Esophagus squamous epithelium (tissue), 5 donors: ENCODE measurements at regions of chr5 and their contacts with region 1.

Region 1: DNA sequence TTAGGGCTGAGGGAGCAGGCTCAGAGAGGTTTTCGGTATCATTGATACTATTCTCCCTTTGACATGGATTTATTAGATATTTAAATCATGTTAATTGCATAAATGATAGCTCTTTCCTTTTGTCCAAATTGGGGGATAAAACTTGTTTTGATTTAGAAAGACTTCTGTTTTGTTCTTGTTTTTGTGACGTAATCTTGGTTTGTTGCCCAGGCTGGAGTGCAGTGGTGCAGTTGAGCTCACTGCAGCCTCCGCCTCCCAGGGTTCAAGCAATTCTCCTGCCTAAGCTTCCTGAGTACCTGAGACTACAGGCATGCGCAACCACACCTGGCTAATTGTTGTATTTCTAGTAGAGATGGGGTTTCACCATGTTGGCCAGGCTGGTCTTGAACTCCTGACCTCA is 7.1 kb downstream of the MAT2B start:
- DNase-seq: no peak
- H3K4me3 ChIP-seq: no peak overlapping the region
- H3K27ac ChIP-seq: no peak overlapping the region
- H3K4me1 ChIP-seq: peaks cover 0 to 56% (median 33%) of the 10 kb centered on the region in 3 donors
- H3K27me3 ChIP-seq: no peaks in the 10 kb centered on the region
- CTCF ChIP-seq: no peak
- POLR2A ChIP-seq: no peak

Region 2: GRCh38 chr5:163104464-163104863 is 408.1 kb before region 1 on chr5:
- intact Hi-C with region 1: no loop called
- DNase-seq: no peak
- H3K4me3 ChIP-seq: no peak overlapping the region
- H3K27ac ChIP-seq: no peak overlapping the region
- H3K4me1 ChIP-seq: no peaks in the 10 kb centered on the region
- H3K27me3 ChIP-seq: no peaks in the 10 kb centered on the region
- CTCF ChIP-seq: no peak
- POLR2A ChIP-seq: no peak

Region 3: GRCh38 chr5:163459922-163460766 is 52.4 kb before region 1 on chr5 and contains the starts of genes HMMR and NUDCD2:
- intact Hi-C with region 1: loop called (anchors 10 kb)
- DNase-seq: peak; percentile 83
- H3K4me3 ChIP-seq: peak within 1 kb of the TSS; percentile 57 to 82 (median 74)
- H3K27ac ChIP-seq: peak within 1 kb of the TSS; percentile 92 to 97 (median 96)
- H3K4me1 ChIP-seq: peaks cover 12 to 45% (median 18%) of the 10 kb centered on the region in 3 donors
- H3K27me3 ChIP-seq: no peaks in the 10 kb centered on the region
- CTCF ChIP-seq: peak in 1 of 6 experiments; percentile 32
- POLR2A ChIP-seq: peak in 3 of 4 donors; percentile 59 to 89 (median 87)
- total RNA-seq, gene HMMR: 3.2 to 23.7 (median 11.1) TPM
- total RNA-seq, gene NUDCD2: 2.5 to 11.6 (median 6.1) TPM